ENCODE measurements at regions of chr14 and their contacts with region 1.

Region 1: GRCh38 chr14:60815371-60815770 is 80.8 kb downstream of the MNAT1 start:
- DNase-seq: no peak
- H3K4me3 ChIP-seq: no peak overlapping the region
- H3K27ac ChIP-seq: no peak overlapping the region
- H3K4me1 ChIP-seq: no peaks in the 10 kb centered on the region
- H3K27me3 ChIP-seq: no peaks in the 10 kb centered on the region
- CTCF ChIP-seq: no peak
- POLR2A ChIP-seq: no peak

Region 2: DNA sequence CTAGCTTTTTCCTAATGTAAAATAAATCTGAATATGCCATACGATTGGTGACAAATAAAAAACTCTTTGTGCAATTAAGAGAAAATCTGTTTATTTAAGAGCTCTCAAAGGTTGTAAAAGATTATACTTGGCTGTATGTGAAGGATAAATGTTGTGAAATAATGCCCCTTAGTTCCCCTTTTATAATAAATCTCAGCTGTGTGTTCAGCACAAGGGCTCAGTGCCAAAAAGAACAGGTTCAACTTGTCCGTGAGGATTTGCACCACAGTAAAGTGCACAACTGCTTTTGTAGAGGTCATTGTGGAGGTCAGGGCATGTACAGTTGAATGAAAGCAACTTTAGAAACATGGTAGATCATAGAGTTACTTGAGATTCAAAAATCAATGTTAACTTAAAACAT is 46.9 kb after region 1 on chr14:
- intact Hi-C with region 1: loop called (anchors 5 kb)
- DNase-seq: peak in 1 of 2 donors; percentile 60
- H3K4me3 ChIP-seq: no peak overlapping the region
- H3K27ac ChIP-seq: peak overlapping the region in 1 of 2 donors; percentile 60
- H3K4me1 ChIP-seq: peaks cover 0 to 12% of the 10 kb centered on the region in 2 donors
- H3K27me3 ChIP-seq: no peaks in the 10 kb centered on the region
- CTCF ChIP-seq: no peak
- POLR2A ChIP-seq: no peak

Measured in breast epithelium (tissue), 4 donors.